Mammary epithelial cell (primary cell): ENCODE measurements at regions of chr4 and their contacts with region 1.

Region 1: GRCh38 chr4:6999172-7000055 is 43.8 kb upstream of the TADA2B start:
- DNase-seq: peak; percentile 88
- H3K4me3 ChIP-seq: no peak overlapping the region
- H3K27ac ChIP-seq: peak overlapping the region; percentile 87
- H3K4me1 ChIP-seq: peaks cover 46% of the 10 kb centered on the region
- H3K27me3 ChIP-seq: no peaks in the 10 kb centered on the region
- CTCF ChIP-seq: no peak

Region 2: GRCh38 chr4:6953751-6954380 is 45.5 kb before region 1 on chr4:
- CTCF ChIA-PET with region 1: no interaction called
- dilution Hi-C with region 1: loop called (anchors 5 kb)
- in situ Hi-C with region 1: no loop called
- intact Hi-C with region 1: no loop called
- DNase-seq: peak; percentile 92
- H3K4me3 ChIP-seq: peak overlapping the region in 2 of 3 experiments; percentile 29 to 32
- H3K27ac ChIP-seq: peak overlapping the region; percentile 54
- H3K4me1 ChIP-seq: peaks cover 33% of the 10 kb centered on the region
- H3K27me3 ChIP-seq: no peaks in the 10 kb centered on the region
- CTCF ChIP-seq: no peak

Region 3: DNA sequence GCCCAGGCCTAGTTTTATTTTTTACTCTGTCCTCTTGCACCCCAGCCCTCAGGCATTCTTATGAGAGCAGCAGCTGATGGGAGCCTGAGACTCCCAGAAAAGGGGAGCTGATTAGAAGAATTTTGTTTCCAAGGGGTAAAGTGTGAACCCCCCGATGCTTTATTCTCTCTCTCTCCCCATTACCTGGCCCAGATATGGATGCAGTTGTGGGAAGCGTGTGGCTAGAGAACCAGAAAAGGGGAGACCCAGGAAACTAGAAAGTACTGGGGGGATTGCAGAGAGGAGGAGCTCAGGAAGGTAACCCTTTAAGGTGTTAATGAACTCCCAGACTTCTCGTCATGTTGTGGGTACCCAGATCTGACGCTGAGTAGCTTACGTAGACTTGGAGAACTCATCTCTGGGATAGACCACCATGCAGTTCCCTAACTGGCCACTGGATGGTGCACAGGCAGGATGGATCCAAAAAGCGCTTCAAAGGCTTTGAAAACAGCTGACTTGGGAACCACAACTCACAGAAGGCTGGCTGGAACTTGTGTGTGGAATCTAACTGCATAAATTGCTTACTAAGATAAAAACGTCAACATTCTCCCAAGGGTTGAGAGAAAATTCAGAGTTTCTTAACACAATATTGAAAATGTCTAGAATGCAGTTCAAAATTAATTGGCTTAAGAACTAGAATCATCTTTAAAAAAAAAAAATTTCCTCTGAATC is 25.1 kb before region 1 on chr4:
- CTCF ChIA-PET with region 1: no interaction called
- dilution Hi-C with region 1: no loop called
- in situ Hi-C with region 1: no loop called
- intact Hi-C with region 1: loop called (anchors 1 kb)
- DNase-seq: peak; percentile 76
- H3K4me3 ChIP-seq: no peak overlapping the region
- H3K27ac ChIP-seq: no peak overlapping the region
- H3K4me1 ChIP-seq: no peaks in the 10 kb centered on the region
- H3K27me3 ChIP-seq: no peaks in the 10 kb centered on the region
- CTCF ChIP-seq: peak; percentile 99

Region 4: DNA sequence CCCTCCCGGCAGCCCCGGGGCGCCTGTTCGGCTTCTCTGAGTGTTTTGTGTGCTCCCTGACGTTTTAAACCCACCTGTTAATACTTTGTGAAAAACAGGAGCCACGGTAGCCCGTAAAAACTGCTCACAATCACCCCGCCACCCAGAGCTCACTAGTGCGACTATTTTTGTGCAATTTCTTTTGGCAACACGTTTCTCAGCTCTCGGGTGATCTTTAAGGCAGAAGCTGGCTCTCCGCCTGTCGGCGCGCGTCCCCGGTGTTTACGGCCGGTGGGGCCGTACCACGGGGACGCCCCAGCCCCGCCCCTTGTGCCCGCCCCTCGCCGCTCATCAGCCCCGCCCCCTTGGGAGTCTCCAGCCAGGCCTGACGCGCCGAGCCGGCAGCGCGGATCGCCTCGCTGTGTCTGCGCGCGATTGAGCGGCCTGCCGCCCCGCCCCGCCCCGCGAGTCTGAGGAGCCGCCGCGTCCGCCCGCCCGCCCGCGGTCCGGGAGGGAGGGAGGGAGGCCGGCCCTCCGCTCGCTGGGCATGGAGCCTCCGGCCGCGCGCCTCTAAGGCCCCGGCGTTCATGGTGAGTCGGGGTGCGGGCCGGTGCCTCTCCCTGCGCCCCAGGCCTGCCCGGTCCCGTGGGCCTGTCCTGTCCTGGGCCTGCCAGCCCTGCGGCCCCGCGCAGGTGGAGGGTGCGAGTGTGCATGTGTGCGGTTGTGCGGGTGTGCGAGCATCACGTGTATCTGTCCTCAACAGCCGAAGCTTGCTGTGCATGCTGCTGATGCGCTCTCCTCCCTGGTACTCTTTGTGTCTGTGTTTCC is 12.4 kb before region 1 on chr4:
- CTCF ChIA-PET with region 1: no interaction called
- dilution Hi-C with region 1: no loop called
- in situ Hi-C with region 1: no loop called
- intact Hi-C with region 1: loop called (anchors 1 kb)
- DNase-seq: peak; percentile 93
- H3K4me3 ChIP-seq: peak overlapping the region; percentile 82 to 95 (median 95)
- H3K27ac ChIP-seq: peak overlapping the region; percentile 90
- H3K4me1 ChIP-seq: peaks cover 42% of the 10 kb centered on the region
- H3K27me3 ChIP-seq: no peaks in the 10 kb centered on the region
- CTCF ChIP-seq: peak in 1 of 2 donors; percentile 36

Region 5: GRCh38 chr4:7021930-7022658 is 22.7 kb after region 1 on chr4:
- CTCF ChIA-PET with region 1: no interaction called
- dilution Hi-C with region 1: no loop called
- in situ Hi-C with region 1: no loop called
- intact Hi-C with region 1: loop called (anchors 1 kb)
- DNase-seq: peak; percentile 69
- H3K4me3 ChIP-seq: no peak overlapping the region
- H3K27ac ChIP-seq: peak overlapping the region; percentile 74
- H3K4me1 ChIP-seq: peaks cover 29% of the 10 kb centered on the region
- H3K27me3 ChIP-seq: no peaks in the 10 kb centered on the region
- CTCF ChIP-seq: no peak

Region 6: DNA sequence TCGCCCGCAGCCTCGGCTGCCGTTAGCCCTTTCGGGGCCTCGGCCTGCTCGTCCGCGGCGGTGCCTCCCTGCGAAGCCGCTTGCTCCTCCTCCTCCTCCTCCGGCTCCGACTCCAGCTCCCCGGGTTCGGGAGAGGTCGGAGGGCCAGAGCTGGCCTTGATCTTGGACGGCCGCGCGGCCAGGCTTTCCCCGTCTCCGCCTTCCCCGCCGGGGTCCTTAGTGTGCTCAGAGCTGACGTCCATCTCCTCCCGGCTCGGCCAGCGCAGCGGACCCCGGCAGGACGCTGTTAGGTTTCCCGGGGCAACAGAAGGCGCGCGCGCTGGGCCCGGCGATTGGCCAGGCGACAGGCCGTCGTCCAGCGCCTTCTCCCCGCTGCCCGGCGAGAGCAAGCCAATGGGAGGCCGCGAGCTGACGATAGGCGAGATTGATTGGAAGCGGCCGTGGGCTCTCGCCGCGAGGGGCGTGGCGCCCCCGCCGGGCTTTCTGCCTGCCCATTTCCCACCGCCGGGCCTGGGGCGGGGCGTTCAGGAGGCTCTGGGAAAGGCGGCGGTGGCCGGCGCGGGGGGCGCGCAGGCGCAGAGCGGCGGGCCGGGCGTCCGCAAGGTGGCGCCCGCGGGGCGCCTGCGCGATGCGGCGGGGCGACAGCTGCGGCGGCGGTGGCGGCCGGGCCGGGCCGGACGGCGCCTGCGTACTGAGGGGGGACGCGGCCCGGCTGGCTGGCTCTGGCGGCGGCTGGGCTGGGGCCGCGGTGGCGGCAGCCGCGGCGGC is 43.5 kb after region 1 on chr4 and contains the start of gene TADA2B:
- CTCF ChIA-PET with region 1: no interaction called
- dilution Hi-C with region 1: no loop called
- in situ Hi-C with region 1: no loop called
- intact Hi-C with region 1: loop called (anchors 2 kb)
- DNase-seq: peak; percentile 98
- H3K4me3 ChIP-seq: peak within 1 kb of the TSS; percentile 92 to 98 (median 93)
- H3K27ac ChIP-seq: peak within 1 kb of the TSS; percentile 87
- H3K4me1 ChIP-seq: peaks cover 20% of the 10 kb centered on the region
- H3K27me3 ChIP-seq: no peaks in the 10 kb centered on the region
- CTCF ChIP-seq: peak; percentile 23 to 31
- total RNA-seq, gene TADA2B: 13.3 to 17.2 TPM

Region 7: DNA sequence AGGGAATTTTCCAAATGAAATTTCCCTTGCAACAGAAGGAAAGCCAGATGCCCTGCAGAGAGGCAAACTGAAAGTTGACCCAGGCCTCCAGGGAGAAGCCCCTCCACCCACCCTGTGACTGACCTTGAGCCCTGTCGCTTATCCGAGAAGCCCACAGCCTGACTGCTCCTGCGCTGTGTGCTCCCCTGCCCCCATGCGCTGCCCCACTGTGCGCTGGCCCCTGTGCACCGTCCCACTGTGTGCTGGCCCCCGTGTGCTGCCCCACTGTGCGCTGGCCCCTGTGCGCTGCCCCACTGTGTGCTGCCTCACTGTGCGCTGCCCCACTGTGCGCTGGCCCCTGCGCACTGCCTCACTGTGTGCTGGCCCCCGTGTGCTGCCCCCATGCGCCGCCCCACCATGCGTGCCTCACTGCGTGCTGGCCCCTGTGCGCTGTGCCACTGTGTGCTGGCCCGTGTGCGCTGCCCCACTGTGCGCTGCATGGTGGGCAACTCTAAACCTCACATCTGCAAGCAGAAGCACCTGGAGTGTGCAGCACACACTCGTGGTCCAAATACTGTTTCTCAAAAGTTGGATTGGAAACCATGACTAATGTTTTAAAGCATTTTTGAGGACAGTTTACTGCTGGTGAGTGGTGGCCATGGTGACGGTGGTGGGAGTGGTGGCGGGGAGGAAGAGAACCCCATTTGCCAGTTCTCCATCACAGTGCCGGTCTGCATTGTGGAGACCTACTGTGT is 76.7 kb after region 1 on chr4:
- CTCF ChIA-PET with region 1: no interaction called
- dilution Hi-C with region 1: loop called (anchors 5 kb)
- in situ Hi-C with region 1: no loop called
- intact Hi-C with region 1: no loop called
- DNase-seq: no peak
- H3K4me3 ChIP-seq: no peak overlapping the region
- H3K27ac ChIP-seq: no peak overlapping the region
- H3K4me1 ChIP-seq: no peaks in the 10 kb centered on the region
- H3K27me3 ChIP-seq: peaks cover 2% of the 10 kb centered on the region
- CTCF ChIP-seq: no peak

Region 8: GRCh38 chr4:7347981-7348380 is 348.6 kb after region 1 on chr4:
- CTCF ChIA-PET with region 1: no interaction called
- dilution Hi-C with region 1: no loop called
- in situ Hi-C with region 1: no loop called
- intact Hi-C with region 1: no loop called
- DNase-seq: no peak
- H3K4me3 ChIP-seq: no peak overlapping the region
- H3K27ac ChIP-seq: no peak overlapping the region
- H3K4me1 ChIP-seq: no peaks in the 10 kb centered on the region
- H3K27me3 ChIP-seq: peaks cover 3% of the 10 kb centered on the region
- CTCF ChIP-seq: no peak